Body of pancreas (tissue), 4 donors: ENCODE measurements at regions of chr7 and their contacts with region 1.

Region 1: GRCh38 chr7:129367700-129368388 is 66.4 kb upstream of the STRIP2 start:
- DNase-seq: peak; percentile 77 to 86 (median 80)
- ATAC-seq: peak; percentile 86
- H3K4me3 ChIP-seq: no peak overlapping the region
- H3K27ac ChIP-seq: peak overlapping the region in 3 of 4 donors; percentile 4 to 62 (median 36)
- H3K4me1 ChIP-seq: peaks cover 16% of the 10 kb centered on the region
- H3K27me3 ChIP-seq: no peaks in the 10 kb centered on the region
- CTCF ChIP-seq: peak; percentile 74 to 84 (median 82)
- POLR2A ChIP-seq: peak in 2 of 3 donors; percentile 25 to 31

Region 2: GRCh38 chr7:129468087-129468486 is 100.2 kb after region 1 on chr7:
- intact Hi-C with region 1: loop called (anchors 10 kb)
- DNase-seq: no peak
- ATAC-seq: no peak
- H3K4me3 ChIP-seq: no peak overlapping the region
- H3K27ac ChIP-seq: no peak overlapping the region
- H3K4me1 ChIP-seq: no peaks in the 10 kb centered on the region
- H3K27me3 ChIP-seq: no peaks in the 10 kb centered on the region
- CTCF ChIP-seq: no peak
- POLR2A ChIP-seq: no peak